ENCODE measurements at regions of chr16 and their contacts with region 1.

Region 1: DNA sequence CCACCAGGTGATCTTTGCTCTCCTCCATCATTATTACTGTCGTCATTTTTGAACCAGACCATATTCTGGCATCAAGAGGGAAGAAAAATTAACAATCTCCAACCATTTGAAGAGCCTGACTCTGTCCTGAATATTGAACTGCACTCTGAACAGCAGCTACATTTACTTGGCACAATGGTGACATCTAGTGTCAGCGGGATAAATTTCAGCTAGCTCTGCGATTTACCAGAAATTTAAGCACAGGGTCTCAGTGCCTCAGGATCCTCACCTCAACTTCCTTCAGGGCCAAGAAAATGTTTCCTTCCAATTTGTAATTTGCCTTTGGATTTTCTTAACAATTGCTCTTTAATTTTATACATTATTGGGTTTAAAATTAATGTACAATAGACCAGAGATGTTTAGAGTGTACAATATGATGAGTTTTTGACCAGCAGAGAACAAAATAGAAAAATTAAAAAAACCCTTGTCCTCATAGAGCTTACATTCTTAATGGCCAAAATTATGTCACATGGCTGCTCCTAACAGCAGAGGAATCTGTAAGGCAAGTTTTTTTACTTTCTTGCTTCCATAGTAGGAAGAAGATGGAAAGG is 10.7 kb upstream of the ZNF19 start:
- DNase-seq: peak; percentile 66
- H3K4me3 ChIP-seq: no peak overlapping the region
- H3K27ac ChIP-seq: no peak overlapping the region
- H3K4me1 ChIP-seq: no peaks in the 10 kb centered on the region
- H3K27me3 ChIP-seq: no peaks in the 10 kb centered on the region; the same call in 1 of the 2 replicates
- CTCF ChIP-seq: peak; percentile 77
- EP300 ChIP-seq: no peak
- RAD21 ChIP-seq: peak; percentile 91

Region 2: GRCh38 chr16:71456801-71457200 is 43.1 kb before region 1 on chr16:
- CTCF ChIA-PET with region 1: interaction called, 12 read pairs
- POLR2A ChIA-PET with region 1: no interaction called
- DNase-seq: no peak
- H3K4me3 ChIP-seq: no peak overlapping the region
- H3K27ac ChIP-seq: no peak overlapping the region
- H3K4me1 ChIP-seq: peaks cover 3 to 5% of the 10 kb centered on the region in 2 experiments; a peak in 3 of 4 replicates
- H3K27me3 ChIP-seq: no peaks in the 10 kb centered on the region
- CTCF ChIP-seq: no peak
- EP300 ChIP-seq: no peak
- RAD21 ChIP-seq: no peak

Region 3: DNA sequence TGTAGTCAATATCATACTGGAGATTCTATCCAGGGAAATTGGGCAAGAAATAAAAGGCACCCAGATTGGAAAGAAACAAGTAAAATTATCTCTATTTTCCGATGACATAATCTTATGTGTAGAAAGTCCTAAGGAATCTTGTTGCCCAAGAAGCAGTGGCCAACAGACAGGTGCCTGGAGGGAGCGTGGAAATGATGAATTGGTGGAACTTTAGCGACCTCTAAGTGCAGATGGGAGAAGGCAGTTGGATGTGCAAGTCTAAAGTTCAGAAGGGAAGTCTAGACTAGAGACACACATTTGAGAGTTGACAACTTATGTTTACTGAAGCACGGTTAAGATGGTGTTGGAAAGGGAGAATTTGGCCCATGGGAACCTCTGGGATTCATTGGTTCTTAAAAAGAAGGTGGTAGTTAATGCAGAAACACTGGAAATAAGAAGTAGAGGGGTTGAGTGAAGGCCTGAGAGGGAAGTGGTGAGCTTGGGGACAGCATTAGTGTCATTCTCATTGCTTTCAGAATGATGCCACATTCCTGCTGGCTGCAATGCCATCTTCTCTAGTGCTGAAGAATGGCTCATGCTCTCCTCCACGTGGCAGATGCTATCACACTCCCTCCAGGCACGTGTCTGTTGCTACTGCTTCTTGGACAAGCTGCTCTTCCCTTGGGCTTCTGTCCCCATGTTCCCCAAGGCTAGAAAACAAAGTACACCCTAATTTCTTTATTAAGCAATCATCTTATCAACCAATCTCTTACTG is 53.0 kb after region 1 on chr16:
- CTCF ChIA-PET with region 1: interaction called, 10 read pairs
- POLR2A ChIA-PET with region 1: no interaction called
- DNase-seq: no peak
- H3K4me3 ChIP-seq: no peak overlapping the region
- H3K27ac ChIP-seq: no peak overlapping the region
- H3K4me1 ChIP-seq: no peaks in the 10 kb centered on the region
- H3K27me3 ChIP-seq: no peaks in the 10 kb centered on the region; the same call in 1 of the 2 replicates
- CTCF ChIP-seq: no peak
- EP300 ChIP-seq: no peak
- RAD21 ChIP-seq: no peak

Measured in SK-N-SH (cell line).